ENCODE measurements at regions of chr7 and their contacts with region 1.

Region 1: GRCh38 chr7:100827330-100828227 is at the start of gene EPHB4:
- DNase-seq: peak in 2 of 3 donors; percentile 39 to 70
- H3K4me3 ChIP-seq: peak within 1 kb of the TSS; percentile 50 to 81 (median 65)
- H3K27ac ChIP-seq: peak within 1 kb of the TSS in 1 of 2 experiments; percentile 49
- H3K4me1 ChIP-seq: peaks cover 0 to 36% (median 34%) of the 10 kb centered on the region in 4 experiments
- H3K27me3 ChIP-seq: peaks cover 0 to 11% (median 0%) of the 10 kb centered on the region in 5 experiments

Region 2: DNA sequence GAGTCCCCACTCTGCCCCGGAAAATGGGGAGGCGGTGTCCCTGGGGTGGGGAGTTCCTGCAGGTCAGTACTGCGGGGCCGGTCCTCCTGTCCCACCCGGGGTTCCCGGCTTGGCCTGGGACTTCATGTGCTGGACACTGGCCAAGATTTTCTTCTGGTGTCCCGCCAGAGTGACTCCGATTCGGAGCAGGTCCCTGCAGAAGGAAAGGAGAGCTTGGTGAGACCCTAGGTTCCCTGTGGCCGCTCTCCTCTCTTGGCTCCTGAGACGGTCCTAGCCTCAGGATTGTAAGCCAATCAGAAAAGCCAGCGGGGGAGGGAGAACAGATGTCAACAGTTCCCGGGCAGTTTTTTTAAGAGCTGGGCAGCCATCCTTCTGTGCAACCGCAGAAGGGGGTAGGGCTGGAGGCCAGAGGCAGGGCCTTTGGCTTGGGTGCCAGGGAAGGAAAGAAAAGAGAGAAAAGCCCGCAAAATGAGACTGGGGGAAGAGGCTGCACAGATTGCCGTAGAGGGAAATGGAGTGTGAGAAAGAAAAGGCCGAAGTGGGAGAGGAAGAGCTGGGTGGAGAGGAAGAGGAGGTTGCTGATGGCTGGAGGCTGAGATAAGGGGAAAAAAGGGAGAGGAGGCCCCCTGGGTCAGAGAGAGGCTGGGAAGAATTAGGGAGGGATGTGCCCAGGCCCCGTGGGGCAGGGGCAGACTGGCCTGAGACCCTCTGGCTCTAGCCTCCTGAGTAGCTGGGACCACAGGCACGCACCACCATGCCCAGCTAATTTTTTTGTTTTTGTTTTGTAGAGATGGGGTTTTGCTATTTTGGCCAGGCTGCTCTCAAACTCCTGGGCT is 24.0 kb before region 1 on chr7:
- CTCF ChIA-PET with region 1: interaction called, 108 read pairs
- POLR2A ChIA-PET with region 1: no interaction called
- DNase-seq: peak; percentile 84 to 93 (median 88)
- H3K4me3 ChIP-seq: peak overlapping the region in 4 of 7 experiments; percentile 39 to 72 (median 50)
- H3K27ac ChIP-seq: peak overlapping the region in 1 of 2 experiments; percentile 61
- H3K4me1 ChIP-seq: peaks cover 0 to 44% (median 37%) of the 10 kb centered on the region in 4 experiments
- H3K27me3 ChIP-seq: no peaks in the 10 kb centered on the region